Right ventricle myocardium superior (tissue), 1 donor: ENCODE measurements at regions of chr10 and their contacts with region 1.

Region 1: DNA sequence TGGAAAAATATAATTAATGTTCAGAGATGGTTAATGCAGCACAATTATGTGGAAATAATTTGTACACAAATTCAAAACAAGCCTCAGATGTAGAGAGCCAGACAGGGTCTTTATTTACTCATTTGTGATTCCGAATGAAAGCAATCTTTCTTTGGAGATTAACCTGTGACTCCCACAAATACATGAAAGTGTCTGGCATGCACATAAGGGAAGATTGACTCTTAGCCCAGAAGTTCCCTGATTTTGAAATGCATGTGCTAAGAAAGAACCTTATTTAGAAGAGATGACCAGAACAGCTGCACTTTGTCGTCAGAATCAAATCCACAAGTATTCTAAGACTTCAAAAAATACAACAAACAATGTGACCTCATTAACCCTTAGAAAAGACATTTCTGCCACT is 45.1 kb downstream of the RNLS start:
- DNase-seq: no peak
- ATAC-seq: peak; percentile 73

Region 2: GRCh38 chr10:88157981-88158465 is 380.0 kb before region 1 on chr10:
- intact Hi-C with region 1: no loop called
- DNase-seq: no peak
- ATAC-seq: peak; percentile 82

Region 3: GRCh38 chr10:88401671-88402347 is 136.2 kb before region 1 on chr10:
- intact Hi-C with region 1: loop called (anchors 10 kb)
- DNase-seq: no peak
- ATAC-seq: no peak

Region 4: GRCh38 chr10:88428442-88428841 is 109.6 kb before region 1 on chr10:
- intact Hi-C with region 1: loop called (anchors 10 kb)
- DNase-seq: no peak
- ATAC-seq: peak; percentile 58

Region 5: GRCh38 chr10:88442716-88443115 is 95.3 kb before region 1 on chr10:
- intact Hi-C with region 1: no loop called
- DNase-seq: no peak
- ATAC-seq: peak; percentile 86

Region 6: DNA sequence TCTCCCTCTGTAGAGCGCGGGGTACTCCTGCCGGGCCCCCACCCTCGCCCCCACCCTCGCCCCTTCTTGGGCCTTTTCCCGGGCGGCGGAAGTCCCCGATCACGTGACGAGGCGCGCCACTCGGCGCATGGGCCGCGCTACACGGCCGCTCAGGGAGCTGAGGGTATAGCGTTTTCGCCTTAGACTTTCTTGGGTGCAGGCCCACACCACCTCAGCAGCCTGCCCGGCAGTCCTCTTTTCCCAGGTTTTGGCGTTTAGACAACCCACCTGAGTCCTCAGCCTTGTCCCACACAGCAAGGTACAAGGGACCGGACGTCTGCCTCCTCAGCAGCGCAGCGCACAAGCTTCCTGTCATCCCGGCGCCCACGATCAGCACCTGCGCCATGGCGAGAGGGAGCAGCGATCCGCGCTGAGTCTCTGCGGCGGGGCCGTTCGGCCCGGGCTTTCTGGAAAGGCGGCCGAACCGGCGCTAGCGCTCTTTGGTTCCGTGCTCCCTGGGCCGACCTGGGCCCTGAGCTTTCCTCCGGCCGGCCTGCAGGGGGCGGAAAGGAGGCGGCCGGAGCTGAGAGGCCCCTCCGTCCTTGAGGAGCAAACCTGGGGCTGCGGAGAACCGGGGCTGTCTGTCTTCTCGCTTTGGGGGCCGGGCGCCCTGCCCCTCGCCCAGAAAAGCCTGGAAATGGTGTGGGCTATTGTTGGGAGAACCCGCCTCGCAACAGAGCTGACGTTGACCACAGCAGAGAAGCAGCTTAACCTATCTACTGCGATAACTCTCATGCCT is 45.0 kb after region 1 on chr10 and contains the start of gene RNLS:
- intact Hi-C with region 1: no loop called
- DNase-seq: peak; percentile 85
- ATAC-seq: peak; percentile 98
- total RNA-seq, gene RNLS: 22.5 TPM

Region 7: GRCh38 chr10:89003344-89003743 is 465.3 kb after region 1 on chr10:
- intact Hi-C with region 1: no loop called
- DNase-seq: no peak
- ATAC-seq: no peak